ENCODE measurements at regions of chrX and their contacts with region 1.

Region 1: GRCh38 chrX:154980330-154981096 is 42.0 kb downstream of the F8 start:
- DNase-seq: peak; percentile 70 to 74
- H3K4me3 ChIP-seq: peak overlapping the region; percentile 42 to 46
- H3K27ac ChIP-seq: no peak overlapping the region
- H3K4me1 ChIP-seq: peaks cover 0 to 3% (median 0%) of the 10 kb centered on the region in 4 donors
- H3K27me3 ChIP-seq: no peaks in the 10 kb centered on the region
- CTCF ChIP-seq: peak; percentile 59 to 70

Region 2: DNA sequence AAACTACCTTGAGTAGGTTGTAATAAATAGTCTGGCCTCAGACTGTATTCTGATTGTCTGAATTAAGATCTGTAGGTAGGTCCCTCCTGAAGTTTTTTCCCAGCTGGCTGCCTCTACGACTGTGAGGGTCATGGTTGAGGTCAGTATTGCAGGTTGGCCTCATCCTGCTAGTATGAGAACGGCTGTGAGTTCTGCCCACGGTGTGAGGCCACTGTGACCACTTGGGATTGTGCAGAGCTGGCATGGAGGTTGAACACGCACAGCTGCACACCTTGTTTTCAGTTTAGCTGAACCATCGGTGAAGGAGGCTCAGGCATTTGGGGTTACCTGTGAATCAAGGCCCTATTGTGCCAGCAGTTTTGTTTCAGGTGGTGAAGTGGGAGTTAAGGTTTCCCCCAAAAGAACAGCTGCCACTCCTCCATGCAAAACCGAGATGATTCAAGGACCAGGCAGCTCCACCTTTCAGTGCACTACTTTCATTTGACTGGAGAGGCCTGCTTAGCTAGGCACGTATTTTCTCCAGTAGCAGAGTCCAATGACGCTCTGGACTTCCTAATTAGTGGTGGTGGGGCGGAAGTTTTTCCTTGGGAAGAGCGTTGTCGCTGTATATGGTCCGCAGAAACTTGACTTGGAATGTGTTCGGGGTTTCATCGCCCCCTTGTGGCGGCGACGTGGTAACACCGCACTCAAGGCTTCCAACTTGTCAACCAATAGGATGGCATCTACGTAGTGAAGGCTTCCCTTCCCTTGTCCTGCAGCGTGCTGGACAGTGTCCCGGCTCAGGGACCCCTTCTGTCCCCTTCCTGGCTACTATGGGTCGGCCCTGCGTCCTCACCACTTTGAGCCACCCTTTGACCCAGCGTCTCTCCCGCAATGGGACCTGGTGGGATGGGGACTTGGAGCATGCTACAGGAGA is 76.6 kb after region 1 on chrX:
- intact Hi-C with region 1: loop called (anchors 5 kb)
- DNase-seq: peak; percentile 53 to 77
- H3K4me3 ChIP-seq: peak overlapping the region; percentile 6 to 22
- H3K27ac ChIP-seq: peak overlapping the region; percentile 21 to 61
- H3K4me1 ChIP-seq: peaks cover 0 to 8% (median 0%) of the 10 kb centered on the region in 4 donors
- H3K27me3 ChIP-seq: no peaks in the 10 kb centered on the region
- CTCF ChIP-seq: peak; percentile 58 to 71

Measured in tibial artery (tissue), 4 donors.